Activated naive CD4-positive, alpha-beta T cell treated with anti-CD3 and anti-CD28 coated beads for 36 hours (primary cell): ENCODE measurements at regions of chr20 and their contacts with region 1.

Region 1: GRCh38 chr20:36645998-36646397 is at the start of gene SLA2:
- DNase-seq: peak; percentile 83
- H3K4me3 Mint-ChIP-seq: peak within 1 kb of the TSS; percentile 97
- H3K27ac Mint-ChIP-seq: peak within 1 kb of the TSS; percentile 98
- H3K4me1 Mint-ChIP-seq: peaks cover 45% of the 10 kb centered on the region
- H3K27me3 Mint-ChIP-seq: no peaks in the 10 kb centered on the region
- total RNA-seq, gene SLA2: 44.1 TPM

Region 2: GRCh38 chr20:36573103-36573794 is 72.7 kb before region 1 on chr20 and contains the start of gene TGIF2:
- CTCF ChIA-PET with region 1: no interaction called
- intact Hi-C with region 1: loop called (anchors 1 kb)
- DNase-seq: peak; percentile 90
- H3K4me3 Mint-ChIP-seq: peak within 1 kb of the TSS; percentile 91
- H3K27ac Mint-ChIP-seq: peak within 1 kb of the TSS; percentile 93
- H3K4me1 Mint-ChIP-seq: peaks cover 35% of the 10 kb centered on the region
- H3K27me3 Mint-ChIP-seq: no peaks in the 10 kb centered on the region
- total RNA-seq, gene TGIF2: 32.2 to 33.6 TPM

Region 3: DNA sequence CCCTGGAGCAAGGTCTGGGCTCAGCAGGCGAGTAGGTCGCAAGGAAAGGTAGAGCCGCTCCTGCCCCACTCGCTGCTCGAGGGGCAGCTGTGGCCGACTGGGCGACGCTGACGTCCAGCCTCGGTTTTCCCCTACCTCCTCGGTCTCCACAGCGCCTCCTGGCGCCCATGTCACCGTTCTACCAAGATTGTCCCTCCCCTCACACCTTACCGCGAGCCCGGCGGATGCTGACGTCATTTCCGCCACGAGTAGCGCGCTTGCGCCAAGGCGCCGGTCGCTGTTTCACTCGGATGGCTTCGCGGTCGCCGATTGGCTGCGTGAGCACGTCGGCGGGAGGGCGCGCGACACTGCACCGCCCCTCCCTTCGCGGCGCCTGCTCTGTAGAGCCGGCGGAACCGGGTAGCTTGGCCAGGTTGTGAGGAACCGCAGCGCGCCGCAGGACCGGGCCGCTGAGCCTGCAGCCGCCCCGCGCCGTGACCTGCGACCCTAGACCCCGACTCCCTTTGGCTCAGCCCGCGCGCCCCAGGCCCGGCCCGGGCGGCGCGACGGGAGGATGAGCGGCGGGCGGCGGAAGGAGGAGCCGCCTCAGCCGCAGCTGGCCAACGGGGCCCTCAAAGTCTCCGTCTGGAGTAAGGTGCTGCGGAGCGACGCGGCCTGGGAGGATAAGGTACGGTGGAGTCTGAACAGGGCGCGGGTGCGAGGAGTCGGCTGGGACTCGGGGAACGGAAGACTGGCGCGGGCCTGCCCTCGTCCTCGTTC is 40.4 kb before region 1 on chr20 and contains the start of gene RAB5IF:
- CTCF ChIA-PET with region 1: interaction called, 11 read pairs
- intact Hi-C with region 1: loop called (anchors 1 kb)
- DNase-seq: peak; percentile 99
- H3K4me3 Mint-ChIP-seq: peak within 1 kb of the TSS; percentile 97
- H3K27ac Mint-ChIP-seq: peak within 1 kb of the TSS; percentile 95
- H3K4me1 Mint-ChIP-seq: peaks cover 25% of the 10 kb centered on the region
- H3K27me3 Mint-ChIP-seq: no peaks in the 10 kb centered on the region
- total RNA-seq, gene RAB5IF: 79.8 to 85.9 TPM

Region 4: DNA sequence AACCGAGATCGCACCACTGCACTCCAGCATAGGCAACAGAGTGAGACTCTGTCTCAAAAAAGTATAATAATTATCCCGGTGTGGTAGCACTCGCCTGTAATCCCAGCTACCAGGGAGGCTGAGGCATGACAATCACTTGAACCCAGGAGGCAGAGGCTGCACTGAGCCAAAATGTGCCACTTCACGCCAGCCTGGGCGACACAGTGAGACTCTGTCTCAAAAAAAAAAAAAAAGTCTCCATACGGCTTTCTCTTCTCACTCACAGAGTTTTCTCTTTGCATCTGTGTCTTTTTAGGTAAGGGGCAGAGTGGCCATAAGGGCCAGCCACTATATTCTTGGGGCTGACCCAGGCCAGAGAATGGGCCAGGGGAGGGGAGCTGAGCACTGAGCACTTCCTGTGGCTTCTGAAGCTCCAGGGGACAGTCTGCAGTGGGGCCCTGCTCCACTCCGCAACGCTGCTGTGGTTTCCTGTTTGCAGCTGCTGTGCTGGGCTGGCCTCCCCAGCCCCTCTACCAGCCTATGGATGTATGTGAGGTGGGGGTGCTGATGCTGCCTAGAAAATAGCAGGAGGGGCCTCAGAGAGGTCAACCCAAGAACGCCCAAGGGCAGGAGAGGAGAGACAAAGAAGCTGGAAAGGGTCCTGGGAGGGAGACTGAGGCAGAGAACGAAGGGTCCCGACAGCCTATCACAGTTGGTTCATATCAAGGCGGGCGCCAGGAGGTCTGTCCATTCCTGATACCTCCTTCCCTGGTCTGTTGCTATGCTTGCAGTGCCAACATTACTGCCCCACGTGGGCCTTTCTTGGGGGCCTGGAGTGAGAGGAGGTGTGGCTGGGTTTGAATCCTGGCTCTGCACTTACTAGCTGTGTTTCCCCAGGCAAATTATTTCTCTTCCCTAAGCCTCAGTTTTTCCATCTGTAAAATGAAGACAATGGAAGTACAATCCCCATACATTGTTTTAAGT is 16.0 kb before region 1 on chr20:
- CTCF ChIA-PET with region 1: interaction called, 6 read pairs
- intact Hi-C with region 1: loop called (anchors 2 kb)
- DNase-seq: peak; percentile 76
- H3K4me3 Mint-ChIP-seq: peak overlapping the region; percentile 51
- H3K27ac Mint-ChIP-seq: peak overlapping the region; percentile 94
- H3K4me1 Mint-ChIP-seq: peaks cover 31% of the 10 kb centered on the region
- H3K27me3 Mint-ChIP-seq: no peaks in the 10 kb centered on the region

Region 5: DNA sequence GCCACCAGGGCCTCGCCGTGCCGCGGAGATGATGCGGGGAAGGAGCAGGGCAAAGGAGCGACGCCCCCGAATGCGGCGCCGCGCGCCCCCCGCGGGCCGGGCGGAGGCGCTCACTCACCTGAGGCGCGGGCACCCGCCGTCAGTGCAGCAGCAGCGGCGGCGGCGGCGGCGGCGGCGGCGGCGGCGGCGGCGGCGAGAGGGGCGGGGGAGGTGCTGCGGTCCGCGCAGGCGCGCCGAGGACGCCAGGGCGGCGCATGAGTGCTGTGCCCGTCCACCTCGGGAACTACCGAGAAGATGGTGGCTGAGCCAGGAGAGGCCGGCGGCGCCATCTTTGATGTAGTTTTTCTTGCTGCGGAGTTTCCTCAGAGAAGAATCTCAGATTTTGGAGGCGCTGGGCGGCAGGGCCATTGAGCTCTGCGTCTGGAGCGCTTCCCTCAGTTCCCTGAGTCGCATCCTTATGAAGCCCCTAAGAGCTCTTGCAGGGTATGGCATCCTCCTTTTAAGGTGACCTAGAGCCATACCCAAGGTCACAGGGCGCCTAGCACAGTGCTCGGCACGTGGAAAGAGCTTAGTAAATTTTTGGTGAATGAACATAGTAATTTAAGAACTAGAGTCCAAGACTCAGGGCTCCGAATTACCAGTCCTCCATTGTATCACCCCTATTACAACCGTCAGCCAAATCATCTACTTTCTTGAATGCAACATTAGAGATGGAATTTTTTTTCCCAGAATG is 100.1 kb after region 1 on chr20 and contains the start of gene NDRG3:
- CTCF ChIA-PET with region 1: interaction called, 4 read pairs
- intact Hi-C with region 1: loop called (anchors 1 kb)
- DNase-seq: peak; percentile 96
- H3K4me3 Mint-ChIP-seq: peak within 1 kb of the TSS; percentile 86
- H3K27ac Mint-ChIP-seq: peak within 1 kb of the TSS; percentile 86
- H3K4me1 Mint-ChIP-seq: peaks cover 21% of the 10 kb centered on the region
- H3K27me3 Mint-ChIP-seq: no peaks in the 10 kb centered on the region
- total RNA-seq, gene NDRG3: 26.1 to 28.2 TPM